Activated CD4-positive, alpha-beta T cell treated with anti-CD3 and anti-CD28 coated beads, Interleukin-2, amount 10 ng/mL, durations not matched to agents 24 days and 14 days (primary cell): ENCODE measurements at regions of chr2 and their contacts with region 1.

Region 1: DNA sequence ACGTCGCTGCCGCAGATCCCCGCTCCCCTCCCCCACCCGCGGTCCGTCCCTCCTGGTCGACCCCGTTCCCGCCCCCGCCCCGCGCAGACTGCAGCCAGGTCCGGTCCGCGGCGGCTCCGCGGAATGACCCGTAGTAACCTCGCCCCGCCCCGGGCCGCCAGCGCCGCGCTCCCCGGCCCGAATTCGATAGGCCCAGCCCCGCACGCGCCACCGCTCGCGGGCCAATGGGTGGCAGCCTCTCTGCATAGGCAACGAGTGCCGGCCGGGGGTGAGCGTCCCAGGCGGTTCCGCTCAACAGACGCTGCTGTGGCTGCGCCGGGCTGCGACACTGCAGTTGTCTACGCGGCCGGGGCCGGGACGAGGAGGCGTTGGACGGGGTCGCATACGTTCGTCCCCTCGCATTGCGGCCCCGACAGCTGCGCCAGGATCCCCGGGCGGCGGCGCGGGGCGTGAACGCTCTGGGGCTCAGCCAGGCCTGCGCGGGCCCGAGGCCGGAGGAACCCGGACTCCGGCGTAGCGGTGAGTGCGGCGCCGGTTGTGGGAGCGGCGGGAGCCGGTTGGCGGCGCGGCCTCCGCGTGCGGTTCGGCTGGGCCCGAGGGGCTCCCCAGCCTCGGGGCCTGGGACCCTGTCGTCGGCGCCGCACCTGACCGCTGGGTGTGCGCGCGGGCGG is at the start of gene ACSL3:
- DNase-seq: peak; percentile 99
- H3K4me3 Mint-ChIP-seq: peak within 1 kb of the TSS; percentile 77
- H3K27ac Mint-ChIP-seq: peak within 1 kb of the TSS; percentile 67
- H3K4me1 Mint-ChIP-seq: peaks cover 9% of the 10 kb centered on the region
- H3K27me3 Mint-ChIP-seq: peaks cover 9% of the 10 kb centered on the region
- total RNA-seq, gene ACSL3: 67.5 and 78.1 TPM in 2 replicates

Region 2: DNA sequence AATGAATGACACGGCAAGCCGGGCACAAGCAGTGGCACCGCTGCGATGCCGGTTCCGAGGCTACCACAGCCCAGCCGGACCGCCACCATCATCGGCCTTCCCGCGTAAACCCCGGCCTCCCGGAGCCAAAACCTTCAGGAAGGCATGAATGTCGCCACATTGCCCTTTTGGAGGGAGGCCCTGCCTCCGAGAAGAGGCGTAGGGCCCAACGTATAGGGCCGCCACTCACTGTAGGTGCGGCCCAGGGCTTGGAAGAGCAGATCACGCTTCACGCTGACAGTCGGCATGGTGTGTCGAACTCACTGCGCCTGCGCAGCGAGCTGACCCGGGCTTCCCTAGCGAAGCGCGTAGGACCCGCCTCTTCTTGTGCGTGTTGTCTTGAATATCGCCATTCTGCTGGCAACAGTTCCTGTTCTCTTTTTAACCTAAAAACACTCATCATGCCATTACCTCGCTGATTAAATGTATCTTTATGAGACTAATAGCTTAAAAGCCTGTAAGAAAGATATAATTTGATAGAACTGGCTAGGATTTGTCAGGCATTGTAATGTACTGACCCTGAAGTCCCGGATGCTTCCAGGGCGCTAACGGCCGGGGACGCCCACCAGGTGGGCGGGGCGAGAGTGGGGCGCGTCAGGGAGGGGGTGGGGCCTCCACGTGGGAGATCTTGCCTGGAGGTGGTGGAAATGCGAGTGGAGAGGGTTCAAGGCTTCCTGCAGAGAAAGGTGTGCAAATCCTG is 204.9 kb before region 1 on chr2 and contains the start of gene FARSB:
- intact Hi-C with region 1: loop called (anchors 1 kb)
- DNase-seq: peak; percentile 98
- H3K4me3 Mint-ChIP-seq: peak within 1 kb of the TSS; percentile 100
- H3K27ac Mint-ChIP-seq: peak within 1 kb of the TSS; percentile 98
- H3K4me1 Mint-ChIP-seq: peaks cover 32% of the 10 kb centered on the region
- H3K27me3 Mint-ChIP-seq: peaks cover 2% of the 10 kb centered on the region
- total RNA-seq, gene FARSB: 57.4 and 58.5 TPM in 2 replicates

Region 3: DNA sequence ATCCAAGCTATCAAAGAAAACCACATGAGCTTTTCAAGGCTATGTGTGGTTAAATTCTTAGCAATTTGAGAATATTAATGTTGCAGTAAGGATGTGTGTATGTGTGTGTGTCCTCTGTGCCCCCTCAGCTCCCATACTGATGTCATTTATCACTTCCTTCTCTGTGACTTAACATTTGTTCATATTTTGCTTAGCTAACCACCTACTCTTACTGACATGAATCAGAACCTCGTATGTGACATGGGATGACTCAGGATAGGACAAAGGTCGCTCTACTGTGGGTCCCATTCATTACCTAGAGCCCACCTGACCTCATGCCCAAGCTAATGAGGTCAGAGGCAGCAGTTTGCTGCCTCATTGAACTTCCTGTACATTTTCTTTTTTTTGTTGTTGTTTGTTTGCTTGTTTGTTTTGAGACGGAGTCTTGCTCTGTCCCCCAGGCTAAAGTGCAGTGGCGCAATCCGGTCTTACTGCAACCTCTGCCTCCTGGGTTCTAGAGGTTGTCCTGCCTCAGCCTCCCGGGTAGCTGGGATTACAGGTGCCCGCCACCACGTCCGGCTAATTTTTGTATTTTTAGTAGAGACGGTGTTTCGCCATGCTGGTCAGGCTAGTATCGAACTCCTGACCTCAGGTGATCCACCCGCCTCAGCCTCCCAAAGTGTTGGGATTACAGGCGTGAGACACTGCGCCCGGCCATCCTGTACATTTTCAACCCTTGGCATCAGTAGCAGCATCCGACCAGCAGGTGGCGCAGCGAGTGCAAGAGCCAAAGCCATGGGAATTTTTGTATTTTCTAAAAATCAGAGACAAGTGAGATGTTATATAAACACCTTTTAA is 153.0 kb before region 1 on chr2:
- intact Hi-C with region 1: loop called (anchors 1 kb)
- DNase-seq: peak; percentile 92
- H3K4me3 Mint-ChIP-seq: no peak overlapping the region
- H3K27ac Mint-ChIP-seq: no peak overlapping the region
- H3K4me1 Mint-ChIP-seq: peaks cover 17% of the 10 kb centered on the region
- H3K27me3 Mint-ChIP-seq: peaks cover 34% of the 10 kb centered on the region

Region 4: DNA sequence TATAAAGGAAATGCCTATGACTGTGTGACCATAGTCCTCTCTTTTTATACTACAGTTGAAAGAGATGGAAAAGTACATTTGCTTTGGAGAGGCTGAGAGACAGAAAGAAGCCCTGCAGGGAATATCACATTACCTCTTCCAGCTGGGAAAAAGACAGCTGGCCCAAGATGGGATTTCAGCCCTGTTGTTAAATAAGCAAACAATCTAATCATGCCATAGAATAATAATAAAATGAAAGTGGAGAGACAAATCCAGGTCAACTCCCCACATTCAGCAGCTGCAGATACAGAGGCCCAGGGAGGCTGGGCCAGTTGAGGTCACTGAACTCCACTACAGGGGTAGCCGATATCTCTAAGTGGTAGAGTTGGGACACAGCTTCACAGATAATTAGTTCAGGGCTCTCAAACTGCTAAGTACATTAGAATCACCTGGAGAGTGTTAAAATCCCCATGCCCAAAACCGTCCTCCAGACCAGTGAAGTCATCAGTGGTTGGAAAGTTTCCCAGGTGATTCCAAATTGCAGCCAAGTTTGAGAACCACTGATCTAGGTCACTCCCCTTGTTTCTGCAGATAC is 107.5 kb before region 1 on chr2:
- intact Hi-C with region 1: no loop called
- DNase-seq: no peak
- H3K4me3 Mint-ChIP-seq: no peak overlapping the region
- H3K27ac Mint-ChIP-seq: no peak overlapping the region
- H3K4me1 Mint-ChIP-seq: peaks cover 16% of the 10 kb centered on the region
- H3K27me3 Mint-ChIP-seq: no peaks in the 10 kb centered on the region

Region 5: DNA sequence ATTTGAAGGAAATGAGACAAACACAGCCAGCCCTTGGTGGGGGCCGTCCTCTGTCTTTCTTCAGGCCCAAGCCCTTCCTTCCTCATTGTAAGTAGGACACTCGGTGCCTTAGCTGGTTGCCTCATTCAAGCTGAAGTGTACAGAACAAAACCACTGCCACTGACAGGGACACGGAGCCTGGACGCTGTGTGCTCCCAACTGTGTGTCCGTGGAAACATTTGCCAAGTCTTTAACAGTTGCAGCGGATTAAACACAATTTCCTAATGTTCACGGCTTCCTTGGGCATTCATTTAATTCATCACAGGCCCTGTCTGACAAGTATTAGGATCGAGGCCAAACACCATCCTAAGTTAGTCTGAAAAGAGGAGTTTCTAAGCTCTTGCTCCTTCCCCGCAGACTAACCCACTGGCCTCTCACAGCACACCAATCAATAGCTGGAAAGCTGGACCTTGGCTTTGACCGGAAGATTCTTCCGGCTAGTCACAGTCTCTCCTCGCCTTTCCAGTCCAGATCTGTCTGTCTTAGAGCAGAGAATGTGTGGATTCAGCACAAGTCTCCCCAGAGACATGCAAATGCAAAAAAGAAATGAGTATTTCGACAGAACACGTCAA is 68.8 kb before region 1 on chr2:
- intact Hi-C with region 1: loop called (anchors 1 kb)
- DNase-seq: no peak
- H3K4me3 Mint-ChIP-seq: no peak overlapping the region
- H3K27ac Mint-ChIP-seq: no peak overlapping the region
- H3K4me1 Mint-ChIP-seq: peaks cover 11% of the 10 kb centered on the region
- H3K27me3 Mint-ChIP-seq: peaks cover 2% of the 10 kb centered on the region

Region 6: GRCh38 chr2:222813177-222813843 is 47.6 kb before region 1 on chr2:
- intact Hi-C with region 1: loop called (anchors 1 kb)
- DNase-seq: peak; percentile 62
- H3K4me3 Mint-ChIP-seq: peak overlapping the region; percentile 30
- H3K27ac Mint-ChIP-seq: peak overlapping the region; percentile 96
- H3K4me1 Mint-ChIP-seq: peaks cover 22% of the 10 kb centered on the region
- H3K27me3 Mint-ChIP-seq: peaks cover 4% of the 10 kb centered on the region

Region 7: DNA sequence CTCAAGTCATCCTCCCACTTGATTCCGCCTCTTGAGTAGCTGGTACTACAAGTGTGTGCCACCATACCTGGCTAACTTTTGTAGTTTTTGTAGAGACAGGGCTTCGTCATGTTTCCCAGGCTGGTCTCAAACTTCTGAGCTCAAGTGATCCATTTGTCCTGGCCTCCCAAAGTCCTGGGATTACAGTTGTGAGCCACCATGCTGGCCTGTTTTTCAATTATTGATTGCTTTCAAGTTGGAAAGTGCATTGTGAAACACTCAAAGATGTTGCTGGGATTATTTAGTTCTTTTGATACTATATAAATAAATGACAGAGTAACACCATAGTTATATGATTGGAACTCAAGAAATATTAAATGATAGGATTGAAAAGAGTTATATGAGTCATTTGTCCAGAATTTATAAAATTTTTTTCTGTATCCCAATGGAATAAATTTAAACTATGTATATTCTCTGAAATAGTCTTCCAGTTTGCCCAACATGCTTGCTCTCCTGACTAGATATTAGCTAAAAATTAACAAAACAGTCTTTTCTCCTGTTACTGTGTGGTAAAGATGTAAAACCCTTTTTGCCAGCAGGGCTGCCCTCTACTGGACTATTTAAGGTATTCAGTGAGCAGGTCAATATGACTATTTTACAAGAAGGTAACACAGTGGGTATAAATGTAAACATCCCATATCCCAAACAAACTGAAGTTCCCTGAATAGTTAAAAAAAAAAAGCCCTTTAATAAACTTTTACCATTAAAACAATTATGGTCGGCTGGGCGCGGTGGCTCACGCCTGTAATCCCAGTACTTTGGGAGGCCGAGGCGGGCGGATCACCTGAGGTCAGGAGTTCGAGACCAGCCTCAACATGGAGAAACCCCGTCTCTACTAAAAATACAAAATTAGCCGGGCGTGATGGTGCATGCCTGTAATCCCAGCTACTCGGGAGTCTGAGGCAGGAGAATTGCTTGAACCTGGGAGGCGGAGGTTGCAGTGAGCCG is 42.7 kb after region 1 on chr2:
- intact Hi-C with region 1: loop called (anchors 2 kb)
- DNase-seq: peak; percentile 76
- H3K4me3 Mint-ChIP-seq: no peak overlapping the region
- H3K27ac Mint-ChIP-seq: no peak overlapping the region
- H3K4me1 Mint-ChIP-seq: peaks cover 12% of the 10 kb centered on the region
- H3K27me3 Mint-ChIP-seq: no peaks in the 10 kb centered on the region

Region 8: GRCh38 chr2:222939208-222939856 is 78.5 kb after region 1 on chr2:
- intact Hi-C with region 1: loop called (anchors 5 kb)
- DNase-seq: peak; percentile 91
- H3K4me3 Mint-ChIP-seq: no peak overlapping the region
- H3K27ac Mint-ChIP-seq: no peak overlapping the region
- H3K4me1 Mint-ChIP-seq: peaks cover 2% of the 10 kb centered on the region
- H3K27me3 Mint-ChIP-seq: no peaks in the 10 kb centered on the region